ENCODE measurements at regions of chr19 and their contacts with region 1.

Region 1: GRCh38 chr19:12681074-12681951 is at the start of gene DHPS:
- DNase-seq: peak; percentile 72 to 97 (median 89)
- ATAC-seq: peak; percentile 79 to 84
- H3K4me3 Mint-ChIP-seq: peak within 1 kb of the TSS; percentile 89 to 98 (median 96)
- H3K27ac Mint-ChIP-seq: peak within 1 kb of the TSS; percentile 89 to 98 (median 96)
- H3K4me1 Mint-ChIP-seq: peaks cover 17 to 37% (median 26%) of the 10 kb centered on the region in 4 donors
- H3K27me3 Mint-ChIP-seq: peaks cover 0 to 1% (median 0%) of the 10 kb centered on the region in 5 donors
- polyA plus RNA-seq, gene DHPS: 74.8 to 108 (median 88.9) TPM

Region 2: GRCh38 chr19:12610540-12611360 is 70.6 kb before region 1 on chr19 and contains the starts of genes ZNF490 and ZNF791:
- POLR2A ChIA-PET with region 1: interaction called, 18 read pairs
- DNase-seq: peak; percentile 87 to 99 (median 96)
- ATAC-seq: peak; percentile 87 to 88
- H3K4me3 Mint-ChIP-seq: peak within 1 kb of the TSS; percentile 98 to 100 (median 100)
- H3K27ac Mint-ChIP-seq: peak within 1 kb of the TSS; percentile 98 to 100 (median 100)
- H3K4me1 Mint-ChIP-seq: peaks cover 17 to 72% (median 46%) of the 10 kb centered on the region in 4 donors
- H3K27me3 Mint-ChIP-seq: no peaks in the 10 kb centered on the region
- polyA plus RNA-seq, gene ZNF490: 3.7 to 6.8 (median 6.5) TPM
- polyA plus RNA-seq, gene ZNF791: 14.2 to 18.6 (median 17.9) TPM

Region 3: DNA sequence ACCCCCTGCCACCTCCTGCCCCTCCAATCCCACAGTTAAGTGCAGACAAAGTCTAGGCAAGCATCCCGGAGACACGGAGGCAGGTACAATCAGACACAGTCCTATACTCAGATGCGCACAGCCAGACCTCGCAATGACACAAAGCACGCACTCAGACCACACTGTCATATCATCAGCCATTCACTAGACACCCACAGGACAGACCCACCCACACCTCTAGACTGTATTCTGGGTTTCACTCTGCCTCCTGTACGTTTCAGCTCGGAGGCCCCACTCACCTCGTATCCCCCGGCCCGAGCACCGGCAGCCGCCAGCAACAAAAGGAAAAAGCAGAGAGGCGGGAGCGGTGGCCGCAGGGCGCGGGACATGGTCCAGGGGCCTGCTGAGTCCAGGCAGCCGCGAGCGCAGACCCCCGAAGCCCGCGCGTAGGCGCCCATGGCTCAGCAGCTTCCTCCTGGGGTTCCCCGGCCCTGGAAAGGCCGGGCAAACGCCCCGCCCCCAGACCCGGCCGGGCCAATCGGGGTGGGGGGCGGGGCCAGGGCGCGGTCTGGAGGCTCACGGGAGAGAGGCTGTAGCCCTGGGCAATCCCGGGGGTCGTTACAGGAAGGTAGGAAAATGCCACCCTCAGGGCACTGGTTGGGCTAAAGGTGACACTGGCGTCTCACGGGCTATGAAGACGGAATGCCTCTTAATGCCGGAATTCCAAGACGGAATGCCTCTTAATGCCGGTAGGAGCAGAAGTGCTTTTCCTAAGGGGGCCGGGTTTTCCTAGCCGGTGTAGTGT is 14.9 kb before region 1 on chr19 and contains the starts of genes MAN2B1 and WDR83:
- POLR2A ChIA-PET with region 1: interaction called, 32 read pairs
- DNase-seq: peak; percentile 39 to 85 (median 76)
- ATAC-seq: peak; percentile 75 to 79
- H3K4me3 Mint-ChIP-seq: peak within 1 kb of the TSS; percentile 93 to 99 (median 96)
- H3K27ac Mint-ChIP-seq: peak within 1 kb of the TSS; percentile 85 to 100 (median 96)
- H3K4me1 Mint-ChIP-seq: peaks cover 18 to 66% (median 58%) of the 10 kb centered on the region in 4 donors
- H3K27me3 Mint-ChIP-seq: no peaks in the 10 kb centered on the region
- polyA plus RNA-seq, gene MAN2B1: 33.9 to 55.4 (median 34.7) TPM
- polyA plus RNA-seq, gene WDR83: 12.6 to 19.9 (median 12.9) TPM

Region 4: DNA sequence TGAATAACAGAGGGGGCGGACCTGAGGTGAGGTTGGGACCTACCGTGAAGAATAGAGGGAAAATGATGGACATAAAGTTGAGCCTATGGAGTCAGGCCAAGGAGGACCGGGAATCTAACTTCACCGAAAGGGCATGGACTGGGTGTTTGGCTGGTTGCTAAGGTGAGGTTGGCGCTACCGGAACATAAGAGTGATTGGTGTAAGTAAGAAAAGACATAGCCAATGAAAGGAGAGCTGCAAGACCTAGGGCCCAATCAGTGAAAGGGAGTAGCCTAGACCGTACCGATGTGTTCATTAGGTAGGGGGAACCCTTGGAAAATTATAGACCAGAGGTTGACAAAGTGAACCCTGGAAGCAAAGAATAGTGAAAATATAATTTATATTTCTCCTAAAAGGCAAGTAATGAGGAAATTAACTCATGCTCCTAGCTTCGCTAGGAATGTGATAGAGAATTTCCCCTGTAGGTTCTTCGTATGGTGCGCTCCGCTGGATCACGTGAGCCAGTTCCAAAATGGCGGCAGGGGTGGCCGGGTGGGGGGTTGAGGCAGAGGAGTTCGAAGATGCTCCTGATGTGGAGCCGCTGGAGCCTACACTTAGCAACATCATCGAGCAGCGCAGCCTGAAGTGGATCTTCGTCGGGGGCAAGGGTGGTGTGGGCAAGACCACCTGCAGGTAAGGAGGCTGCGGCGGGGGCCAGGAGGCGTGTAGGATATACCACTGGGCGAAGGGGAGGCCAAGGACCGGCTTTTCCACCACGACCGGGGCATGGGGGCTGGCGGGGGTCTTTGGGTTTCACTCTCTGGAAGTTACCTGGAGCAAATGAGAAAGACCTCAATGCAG is 55.9 kb after region 1 on chr19 and contains the start of gene GET3:
- POLR2A ChIA-PET with region 1: interaction called, 23 read pairs
- DNase-seq: peak; percentile 63 to 92 (median 78)
- ATAC-seq: peak; percentile 83 to 87
- H3K4me3 Mint-ChIP-seq: peak within 1 kb of the TSS; percentile 96 to 100 (median 99)
- H3K27ac Mint-ChIP-seq: peak within 1 kb of the TSS; percentile 93 to 100 (median 98)
- H3K4me1 Mint-ChIP-seq: peaks cover 21 to 46% (median 43%) of the 10 kb centered on the region in 4 donors
- H3K27me3 Mint-ChIP-seq: no peaks in the 10 kb centered on the region
- polyA plus RNA-seq, gene GET3: 46.8 to 72.3 (median 55.7) TPM